Activated naive CD4-positive, alpha-beta T cell treated with anti-CD3 and anti-CD28 coated beads for 36 hours (primary cell): ENCODE measurements at regions of chr3 and their contacts with region 1.

Region 1: GRCh38 chr3:10758304-10759061 is 57.5 kb upstream of the SLC6A11 start:
- DNase-seq: peak; percentile 67
- H3K4me3 Mint-ChIP-seq: no peak overlapping the region
- H3K27ac Mint-ChIP-seq: no peak overlapping the region
- H3K4me1 Mint-ChIP-seq: peaks cover 6% of the 10 kb centered on the region
- H3K27me3 Mint-ChIP-seq: peaks cover 32% of the 10 kb centered on the region

Region 2: DNA sequence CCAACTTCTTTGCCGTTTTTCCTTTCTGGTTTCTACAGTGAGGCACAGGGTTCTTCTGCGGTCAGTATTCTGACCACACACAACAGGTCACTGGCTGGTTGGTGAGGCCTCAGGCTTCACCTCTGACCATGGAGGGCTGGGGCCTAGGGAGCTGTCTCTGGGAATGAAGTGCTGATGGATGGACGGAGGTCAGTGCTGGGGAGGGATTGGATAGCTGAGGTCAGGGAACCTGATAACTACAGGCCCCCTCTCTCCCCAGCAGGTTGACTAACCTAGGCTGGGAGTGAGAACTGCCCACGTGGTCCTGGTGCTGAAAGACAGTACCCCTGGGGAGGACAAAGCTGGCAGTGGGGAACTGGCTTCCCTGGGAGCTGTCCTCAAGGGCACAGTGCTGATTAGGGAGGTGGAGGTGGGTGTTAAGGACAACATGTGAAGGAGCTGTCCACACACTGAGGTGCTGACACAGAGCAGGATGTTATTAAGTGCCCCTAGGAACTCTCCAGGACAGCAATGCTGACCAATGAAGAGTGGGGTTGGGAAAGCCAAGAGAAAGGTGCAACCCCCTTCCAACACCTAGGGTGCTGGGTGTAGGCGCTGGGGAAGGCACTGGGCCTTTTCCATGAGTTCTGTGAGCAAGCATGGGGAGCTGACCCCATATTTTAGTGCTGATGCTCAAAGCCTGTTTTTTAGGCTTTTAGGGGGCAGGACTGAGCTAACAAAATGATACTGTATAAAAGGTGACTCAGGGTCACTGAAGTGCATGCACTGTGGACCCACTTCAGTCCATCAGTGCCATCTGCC is 298.3 kb before region 1 on chr3:
- CTCF ChIA-PET with region 1: no interaction called
- intact Hi-C with region 1: loop called (anchors 5 kb)
- DNase-seq: peak; percentile 86
- H3K4me3 Mint-ChIP-seq: no peak overlapping the region
- H3K27ac Mint-ChIP-seq: no peak overlapping the region
- H3K4me1 Mint-ChIP-seq: no peaks in the 10 kb centered on the region
- H3K27me3 Mint-ChIP-seq: no peaks in the 10 kb centered on the region

Region 3: DNA sequence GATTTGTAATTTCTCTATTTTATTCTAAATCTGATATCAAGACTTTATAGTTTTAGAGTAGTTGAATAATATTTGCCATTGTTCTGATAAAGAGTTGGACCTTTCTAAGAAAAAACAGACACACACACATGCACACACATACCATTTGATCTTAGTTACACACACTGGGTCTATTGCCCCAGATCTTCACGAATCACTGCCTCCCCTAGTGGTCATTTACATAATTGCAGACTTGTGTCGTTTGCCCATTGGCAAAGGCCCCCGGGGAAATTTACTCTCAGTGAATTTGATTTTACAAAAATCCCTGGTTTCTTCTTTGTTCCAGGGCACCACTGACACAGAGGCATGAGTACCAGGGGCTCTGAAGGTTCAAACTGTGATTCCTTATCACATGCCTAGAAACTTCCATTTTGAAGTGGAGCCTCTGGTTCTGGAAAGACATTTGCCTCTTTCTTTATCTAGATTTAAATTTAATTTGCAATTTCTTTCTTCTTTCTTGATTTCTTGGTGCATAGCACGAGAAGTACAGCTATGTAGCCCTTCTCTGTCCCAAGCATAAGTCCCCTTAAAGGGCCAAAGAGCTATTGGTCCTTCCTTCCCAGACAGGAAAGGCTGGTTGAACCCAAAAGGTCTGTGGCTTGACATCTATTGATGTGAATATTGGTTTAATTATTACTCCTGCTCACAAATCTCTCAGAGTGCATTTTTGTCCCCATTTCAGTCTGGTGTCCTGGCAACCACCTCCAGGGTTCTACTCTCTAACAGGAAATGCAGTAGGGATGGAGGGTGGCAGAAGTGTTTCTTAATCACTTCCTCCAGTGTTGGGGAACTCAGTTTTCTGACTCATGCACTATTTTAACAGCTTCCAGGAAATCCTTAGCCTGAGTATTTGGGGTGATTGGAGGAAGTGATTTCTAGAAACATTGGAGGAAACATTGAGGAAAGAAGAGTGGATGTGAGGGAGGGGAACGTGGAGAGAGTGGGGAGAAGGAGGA is 25.2 kb after region 1 on chr3:
- CTCF ChIA-PET with region 1: interaction called, 21 read pairs
- intact Hi-C with region 1: loop called (anchors 1 kb)
- DNase-seq: peak; percentile 51
- H3K4me3 Mint-ChIP-seq: no peak overlapping the region
- H3K27ac Mint-ChIP-seq: no peak overlapping the region
- H3K4me1 Mint-ChIP-seq: peaks cover 6% of the 10 kb centered on the region
- H3K27me3 Mint-ChIP-seq: peaks cover 19% of the 10 kb centered on the region

Region 4: DNA sequence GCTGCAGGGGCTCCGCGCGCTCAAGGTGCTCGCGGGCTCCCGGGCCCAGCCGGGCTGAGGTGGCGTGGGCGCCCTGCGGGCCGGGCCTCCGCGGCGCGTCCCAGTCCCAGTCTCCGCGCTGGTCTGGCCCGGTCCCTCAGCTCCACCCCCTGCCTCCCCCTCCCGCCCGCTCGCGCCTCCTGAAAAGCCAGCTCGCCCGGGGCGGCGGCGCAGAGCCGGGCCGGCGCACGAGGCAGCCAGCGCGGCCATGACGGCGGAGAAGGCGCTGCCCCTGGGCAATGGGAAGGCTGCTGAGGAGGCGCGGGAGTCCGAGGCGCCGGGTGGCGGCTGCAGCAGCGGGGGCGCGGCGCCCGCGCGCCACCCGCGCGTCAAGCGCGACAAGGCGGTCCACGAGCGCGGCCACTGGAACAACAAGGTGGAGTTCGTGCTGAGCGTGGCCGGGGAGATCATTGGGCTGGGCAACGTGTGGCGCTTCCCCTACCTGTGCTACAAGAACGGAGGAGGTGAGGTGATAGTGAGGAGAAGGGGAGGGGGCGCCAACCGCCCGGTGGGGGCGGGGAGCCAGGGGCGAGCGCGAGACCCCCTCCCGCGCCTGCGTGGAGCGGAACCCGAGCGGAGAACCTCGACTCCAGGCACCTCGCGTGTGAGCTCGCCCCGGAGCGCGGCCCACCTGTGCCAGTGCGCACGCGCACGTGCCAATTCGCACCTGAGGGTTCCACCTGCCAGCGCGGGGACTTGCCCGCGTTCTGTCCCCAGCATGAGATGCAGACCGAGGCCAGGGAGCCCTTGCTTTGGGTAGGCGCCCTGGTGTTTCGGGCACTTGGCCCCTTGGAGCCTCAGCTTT is 57.8 kb after region 1 on chr3 and contains the start of gene SLC6A11:
- CTCF ChIA-PET with region 1: no interaction called
- intact Hi-C with region 1: no loop called
- DNase-seq: no peak
- H3K4me3 Mint-ChIP-seq: no peak within 1 kb of the TSS
- H3K27ac Mint-ChIP-seq: no peak within 1 kb of the TSS
- H3K4me1 Mint-ChIP-seq: peaks cover 2% of the 10 kb centered on the region
- H3K27me3 Mint-ChIP-seq: peaks cover 28% of the 10 kb centered on the region
- total RNA-seq, gene SLC6A11: not detected

Region 5: GRCh38 chr3:10883478-10884234 is 125.2 kb after region 1 on chr3:
- CTCF ChIA-PET with region 1: interaction called, 9 read pairs
- intact Hi-C with region 1: loop called (anchors 1 kb)
- DNase-seq: peak; percentile 26
- H3K4me3 Mint-ChIP-seq: no peak overlapping the region
- H3K27ac Mint-ChIP-seq: no peak overlapping the region
- H3K4me1 Mint-ChIP-seq: no peaks in the 10 kb centered on the region
- H3K27me3 Mint-ChIP-seq: peaks cover 12% of the 10 kb centered on the region

Region 6: GRCh38 chr3:10945683-10946287 is 187.3 kb after region 1 on chr3:
- CTCF ChIA-PET with region 1: interaction called, 11 read pairs
- intact Hi-C with region 1: loop called (anchors 1 kb)
- DNase-seq: peak; percentile 70
- H3K4me3 Mint-ChIP-seq: no peak overlapping the region
- H3K27ac Mint-ChIP-seq: no peak overlapping the region
- H3K4me1 Mint-ChIP-seq: no peaks in the 10 kb centered on the region
- H3K27me3 Mint-ChIP-seq: peaks cover 15% of the 10 kb centered on the region

Region 7: DNA sequence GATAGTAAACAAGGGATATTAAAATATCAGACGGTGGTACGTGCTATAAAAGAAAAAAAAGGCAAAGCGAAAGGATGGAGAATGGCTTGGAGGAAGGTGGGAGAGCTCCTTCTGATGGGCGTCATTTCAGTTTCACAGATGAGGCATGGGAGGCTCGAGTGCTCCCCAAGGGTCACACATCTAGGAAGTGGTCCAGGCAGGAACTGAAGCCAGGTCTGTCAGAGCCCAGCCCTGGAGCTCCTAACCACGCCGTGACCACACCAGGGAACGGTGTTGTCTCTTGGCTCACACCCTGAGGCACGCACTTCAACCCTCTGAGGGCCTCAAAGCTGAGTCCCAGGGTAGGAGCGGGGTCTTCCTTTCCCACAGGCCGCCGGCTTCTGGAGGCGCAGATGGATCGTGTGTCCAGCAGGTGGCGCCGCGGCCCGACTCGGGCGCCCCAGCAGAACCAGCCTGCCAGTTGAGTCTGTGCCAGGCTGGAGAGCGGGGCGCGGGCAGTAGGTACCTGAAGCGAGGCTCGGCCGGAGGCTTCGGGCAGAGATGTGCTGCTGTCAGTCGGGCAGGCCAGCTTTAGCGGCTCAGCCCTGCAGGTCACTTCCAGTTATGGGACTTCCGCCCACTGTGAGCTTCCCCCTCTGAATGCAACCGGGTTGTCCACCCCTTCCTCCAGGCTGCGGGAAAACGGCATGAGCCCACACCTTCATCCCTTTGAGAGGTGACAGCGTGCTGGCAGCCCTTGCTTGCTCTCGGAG is 302.2 kb after region 1 on chr3:
- CTCF ChIA-PET with region 1: interaction called, 26 read pairs
- intact Hi-C with region 1: loop called (anchors 1 kb)
- DNase-seq: peak; percentile 51
- H3K4me3 Mint-ChIP-seq: no peak overlapping the region
- H3K27ac Mint-ChIP-seq: no peak overlapping the region
- H3K4me1 Mint-ChIP-seq: no peaks in the 10 kb centered on the region
- H3K27me3 Mint-ChIP-seq: peaks cover 13% of the 10 kb centered on the region